ENCODE measurements at regions of chr10 and their contacts with region 1.

Region 1: GRCh38 chr10:121608469-121609190 is 10.4 kb upstream of the FGFR2 start:
- DNase-seq: peak; percentile 55 to 83 (median 79)
- ATAC-seq: peak; percentile 92 to 95
- H3K4me3 ChIP-seq: peak overlapping the region; percentile 34
- H3K27ac ChIP-seq: no peak overlapping the region
- H3K4me1 ChIP-seq: no peaks in the 10 kb centered on the region
- H3K27me3 ChIP-seq: no peaks in the 10 kb centered on the region

Region 2: DNA sequence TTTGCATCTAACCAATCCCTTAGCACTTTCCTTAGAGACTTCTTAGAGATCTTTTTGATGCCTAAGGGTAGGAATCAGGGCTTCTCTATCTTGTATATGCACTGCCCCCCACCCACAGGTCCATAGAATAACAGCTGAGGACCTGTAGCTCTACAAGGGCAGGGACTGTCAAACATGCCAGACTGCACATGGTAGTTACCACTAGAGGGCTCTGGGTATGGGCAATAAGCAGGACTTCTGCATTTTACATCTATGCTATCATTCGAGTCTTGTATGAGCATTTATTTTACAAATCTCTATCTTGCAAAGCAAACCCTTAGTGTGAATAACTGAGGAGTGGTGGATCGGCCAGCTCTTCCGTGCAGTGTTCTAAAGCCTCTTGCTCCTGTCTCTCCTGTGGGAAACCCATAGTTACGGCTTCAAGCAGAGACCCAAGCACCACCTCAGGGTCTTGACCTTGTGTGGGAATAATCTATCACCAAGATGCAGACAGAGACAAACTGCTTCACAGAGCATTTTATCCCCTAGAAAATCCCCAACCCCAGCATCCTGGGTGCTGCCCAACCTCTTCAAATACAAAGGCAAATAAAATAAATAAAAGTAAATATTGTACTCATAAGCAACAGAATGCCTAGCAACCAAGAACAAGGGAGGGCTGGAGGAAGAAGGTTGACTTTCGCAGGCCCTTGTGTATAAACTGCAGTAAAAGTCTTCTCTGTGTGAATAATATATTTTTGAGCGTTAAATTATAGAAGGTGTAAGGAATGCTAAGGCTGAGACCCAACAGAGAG is 538.2 kb before region 1 on chr10:
- intact Hi-C with region 1: loop called in 1 of 4 experiments (anchors 10 kb)
- DNase-seq: no peak
- ATAC-seq: no peak
- H3K4me3 ChIP-seq: no peak overlapping the region
- H3K27ac ChIP-seq: no peak overlapping the region
- H3K4me1 ChIP-seq: no peaks in the 10 kb centered on the region
- H3K27me3 ChIP-seq: no peaks in the 10 kb centered on the region

Region 3: GRCh38 chr10:121734589-121735045 is 126.0 kb after region 1 on chr10:
- intact Hi-C with region 1: loop called in 3 of 4 experiments (anchors 5 to 10 kb)
- DNase-seq: peak in 2 of 3 donors; percentile 16 to 52
- ATAC-seq: peak in 1 of 2 donors; percentile 56
- H3K4me3 ChIP-seq: no peak overlapping the region
- H3K27ac ChIP-seq: no peak overlapping the region
- H3K4me1 ChIP-seq: no peaks in the 10 kb centered on the region
- H3K27me3 ChIP-seq: no peaks in the 10 kb centered on the region

Region 4: GRCh38 chr10:121813211-121813815 is 204.7 kb after region 1 on chr10:
- intact Hi-C with region 1: no loop called
- DNase-seq: no peak
- ATAC-seq: no peak
- H3K4me3 ChIP-seq: no peak overlapping the region
- H3K27ac ChIP-seq: no peak overlapping the region
- H3K4me1 ChIP-seq: no peaks in the 10 kb centered on the region
- H3K27me3 ChIP-seq: no peaks in the 10 kb centered on the region